ENCODE measurements at regions of chr5 and their contacts with region 1.

Region 1: GRCh38 chr5:123423278-123424149 is at the start of gene CEP120:
- DNase-seq: peak; percentile 99
- H3K4me3 ChIP-seq: peak within 1 kb of the TSS; percentile 83
- H3K27ac ChIP-seq: peak within 1 kb of the TSS; percentile 44
- H3K4me1 ChIP-seq: peaks cover 26% of the 10 kb centered on the region
- CTCF ChIP-seq: peak; percentile 84
- total RNA-seq, gene CEP120: 18.0 and 23.3 TPM in 2 replicates

Region 2: DNA sequence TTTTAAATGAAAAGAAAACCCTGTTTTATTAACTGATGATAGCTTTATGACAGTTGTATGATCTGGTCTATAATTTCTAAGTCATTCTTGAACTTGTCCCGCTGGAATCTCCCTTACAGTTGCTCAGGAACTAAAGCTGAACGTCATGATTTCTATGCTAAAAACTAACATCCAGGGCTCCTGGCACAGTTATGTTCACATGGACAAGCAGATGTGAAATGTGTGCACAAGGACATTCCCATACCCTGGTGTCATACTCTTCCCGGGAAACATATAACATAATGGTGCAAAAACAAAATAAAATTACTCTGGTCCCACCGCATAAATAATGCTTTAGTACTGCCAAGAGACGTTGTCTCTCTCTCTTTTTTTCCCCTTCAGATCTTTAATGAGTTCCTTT is 199.6 kb before region 1 on chr5:
- CTCF ChIA-PET with region 1: no interaction called
- POLR2A ChIA-PET with region 1: no interaction called
- intact Hi-C with region 1: no loop called
- DNase-seq: no peak
- H3K4me3 ChIP-seq: no peak overlapping the region
- H3K27ac ChIP-seq: no peak overlapping the region
- H3K4me1 ChIP-seq: no peaks in the 10 kb centered on the region
- CTCF ChIP-seq: no peak

Region 3: GRCh38 chr5:123398058-123398733 is 25.3 kb before region 1 on chr5:
- CTCF ChIA-PET with region 1: interaction called, 3 read pairs
- POLR2A ChIA-PET with region 1: interaction called, 13 read pairs
- intact Hi-C with region 1: loop called (anchors 2 kb)
- DNase-seq: peak; percentile 95
- H3K4me3 ChIP-seq: peak overlapping the region; percentile 39
- H3K27ac ChIP-seq: peak overlapping the region; percentile 87
- H3K4me1 ChIP-seq: peaks cover 26% of the 10 kb centered on the region
- CTCF ChIP-seq: no peak

Region 4: GRCh38 chr5:123511648-123512605 is 88.4 kb after region 1 on chr5 and contains the start of gene CSNK1G3:
- CTCF ChIA-PET with region 1: no interaction called
- POLR2A ChIA-PET with region 1: interaction called, 6 read pairs
- intact Hi-C with region 1: loop called (anchors 1 kb)
- DNase-seq: peak; percentile 96
- H3K4me3 ChIP-seq: peak within 1 kb of the TSS; percentile 86
- H3K27ac ChIP-seq: peak within 1 kb of the TSS; percentile 59
- H3K4me1 ChIP-seq: peaks cover 7% of the 10 kb centered on the region
- CTCF ChIP-seq: no peak
- total RNA-seq, gene CSNK1G3: 21.0 and 23.1 TPM in 2 replicates

Region 5: DNA sequence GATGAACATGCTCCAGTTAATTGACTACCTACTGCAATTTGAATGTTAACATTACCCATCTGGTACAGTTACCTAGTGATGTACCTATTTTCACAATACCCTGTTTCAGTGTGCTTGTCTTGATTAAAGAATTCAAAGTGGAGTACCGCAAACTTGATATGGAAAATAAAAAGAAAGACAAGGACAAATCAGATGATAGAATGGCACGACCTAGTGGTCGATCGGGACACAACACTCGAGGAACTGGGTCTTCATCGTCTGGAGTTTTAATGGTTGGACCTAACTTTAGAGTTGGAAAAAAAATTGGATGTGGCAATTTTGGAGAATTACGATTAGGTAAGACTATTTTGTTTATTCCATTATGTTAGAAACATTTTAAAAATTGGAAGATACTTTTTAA is 122.0 kb after region 1 on chr5:
- CTCF ChIA-PET with region 1: no interaction called
- POLR2A ChIA-PET with region 1: interaction called, 4 read pairs
- intact Hi-C with region 1: loop called (anchors 1 kb)
- DNase-seq: peak; percentile 53
- H3K4me3 ChIP-seq: no peak overlapping the region
- H3K27ac ChIP-seq: no peak overlapping the region
- H3K4me1 ChIP-seq: peaks cover 21% of the 10 kb centered on the region
- CTCF ChIP-seq: peak; percentile 92

Region 6: DNA sequence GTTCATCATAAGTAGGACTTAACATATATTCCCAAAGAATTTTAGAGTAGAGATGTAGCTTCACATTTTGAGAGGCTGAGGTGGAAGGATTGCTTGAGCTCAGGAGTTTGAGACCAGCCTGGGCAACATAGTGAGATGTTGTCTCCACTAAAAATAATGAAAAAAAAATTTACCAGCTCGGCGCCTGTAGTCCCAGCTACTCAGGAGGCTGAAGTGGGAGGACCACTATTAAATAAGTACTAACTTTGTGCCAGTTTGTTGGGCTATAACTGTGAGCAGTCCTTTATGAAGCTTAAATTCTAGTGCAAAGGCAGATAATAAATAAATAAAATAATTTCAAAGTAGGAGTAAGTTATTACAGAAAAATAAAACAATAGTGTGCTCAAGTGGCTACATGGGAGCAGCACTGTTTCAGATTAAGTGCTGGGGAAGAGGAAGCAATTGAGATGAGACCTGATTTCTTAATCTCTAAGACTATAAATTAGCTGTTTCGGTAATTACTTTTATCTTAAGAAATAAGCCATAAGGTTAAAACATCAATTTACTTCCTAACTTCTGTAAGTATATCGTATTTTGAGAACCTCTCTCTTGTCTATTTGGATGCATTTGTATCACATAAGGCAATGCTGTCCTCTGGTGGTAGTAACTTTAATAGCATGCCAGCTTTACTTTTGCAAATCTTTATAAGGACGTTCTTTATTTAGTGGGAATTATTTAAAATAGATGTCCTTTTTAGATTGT is 187.3 kb after region 1 on chr5:
- CTCF ChIA-PET with region 1: interaction called, 3 read pairs
- POLR2A ChIA-PET with region 1: interaction called, 6 read pairs
- intact Hi-C with region 1: loop called (anchors 5 kb)
- DNase-seq: peak; percentile 67
- H3K4me3 ChIP-seq: no peak overlapping the region
- H3K27ac ChIP-seq: no peak overlapping the region
- H3K4me1 ChIP-seq: no peaks in the 10 kb centered on the region
- CTCF ChIP-seq: peak; percentile 100

Region 7: DNA sequence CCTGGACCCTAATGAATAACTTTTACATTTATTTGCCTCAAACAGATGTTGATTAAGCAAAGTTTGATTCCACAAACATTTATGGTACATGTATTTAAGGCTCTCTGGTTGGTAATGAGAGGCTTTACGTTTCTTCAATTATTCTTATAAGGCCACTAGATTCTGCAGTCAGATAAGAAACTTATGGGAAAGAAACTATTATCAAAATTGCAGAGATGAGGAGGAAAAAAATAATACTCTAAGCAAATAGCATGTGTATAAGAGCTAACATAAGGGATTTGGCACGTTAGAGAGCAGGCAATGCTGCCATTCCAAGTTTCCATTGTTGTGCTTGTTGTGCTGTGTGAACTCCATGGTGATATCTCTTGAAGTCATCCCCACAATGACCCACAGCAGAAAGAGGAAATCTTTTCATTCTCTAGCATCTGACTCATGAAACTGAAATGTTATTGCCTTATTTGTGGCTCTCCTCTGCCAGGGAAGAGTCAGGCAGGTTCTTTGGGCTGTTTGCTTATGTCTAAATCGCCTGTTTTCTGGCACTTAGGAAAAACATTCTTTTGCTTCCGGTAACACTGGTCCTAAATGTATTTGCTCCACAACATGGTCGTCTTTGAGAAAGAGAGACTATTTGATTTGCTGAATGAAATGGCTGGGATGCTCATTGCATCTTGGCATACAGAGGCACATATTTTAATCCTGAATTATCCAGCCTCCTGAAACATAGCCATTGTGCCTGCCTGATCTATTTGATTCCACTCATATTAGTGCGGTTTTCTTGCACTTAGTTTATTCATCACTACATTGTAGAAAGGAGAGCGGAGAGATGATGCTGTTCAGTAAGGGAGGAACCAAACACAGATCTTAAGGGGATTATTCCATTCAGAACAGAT is 277.1 kb after region 1 on chr5:
- CTCF ChIA-PET with region 1: no interaction called
- POLR2A ChIA-PET with region 1: no interaction called
- intact Hi-C with region 1: no loop called
- DNase-seq: no peak
- H3K4me3 ChIP-seq: no peak overlapping the region
- H3K27ac ChIP-seq: no peak overlapping the region
- H3K4me1 ChIP-seq: no peaks in the 10 kb centered on the region
- CTCF ChIP-seq: no peak

Measured in OCI-LY7 (cell line).